ENCODE measurements at regions of chr4 and their contacts with region 1.

Region 1: GRCh38 chr4:158729716-158730559 is 6.7 kb upstream of the PPID start:
- DNase-seq: peak; percentile 76
- ATAC-seq: peak; percentile 96
- H3K4me3 ChIP-seq: no peak overlapping the region
- H3K27ac ChIP-seq: no peak overlapping the region
- H3K4me1 ChIP-seq: no peaks in the 10 kb centered on the region
- H3K27me3 ChIP-seq: no peaks in the 10 kb centered on the region; the same call in 1 of the 2 replicates
- CTCF ChIP-seq: peak; percentile 90

Region 2: DNA sequence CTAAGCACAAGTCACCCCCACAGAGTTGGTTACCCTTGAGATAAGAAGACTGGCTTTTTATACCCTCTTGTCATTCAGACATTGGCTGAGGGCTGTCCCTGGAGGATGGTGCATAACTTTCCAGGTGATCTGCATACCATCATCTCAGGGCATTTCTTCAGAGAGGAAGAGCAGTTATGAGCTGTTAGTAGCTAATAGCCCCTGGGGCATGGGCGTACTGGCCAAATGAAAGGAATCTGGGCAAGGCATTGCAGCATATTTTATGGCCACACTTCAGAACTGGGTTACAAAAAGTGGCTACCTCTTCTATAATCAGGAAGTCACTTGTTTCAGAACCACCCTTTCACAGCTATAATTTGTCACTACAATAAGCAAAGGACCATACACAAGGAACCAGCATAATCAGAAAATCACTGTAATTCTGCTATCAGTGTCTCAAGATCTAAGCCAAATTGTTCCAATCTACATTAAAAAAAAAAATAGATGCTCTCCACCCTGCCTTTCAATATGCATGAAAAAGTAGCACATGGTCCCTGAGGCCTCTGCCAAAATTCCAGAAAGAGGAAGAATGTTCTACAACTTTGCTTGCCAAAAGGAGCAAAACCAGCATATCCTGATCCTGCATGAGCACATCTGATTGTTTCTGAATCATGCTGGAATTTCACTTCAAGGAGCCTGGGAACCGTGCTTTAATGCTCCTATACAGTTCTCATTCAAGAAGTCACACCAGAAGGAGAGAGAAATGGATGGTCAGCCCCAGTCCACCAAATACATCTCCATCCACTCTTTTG is 427.7 kb before region 1 on chr4:
- CTCF ChIA-PET with region 1: no interaction called
- POLR2A ChIA-PET with region 1: no interaction called
- in situ Hi-C with region 1: no loop called
- intact Hi-C with region 1: no loop called
- DNase-seq: no peak
- ATAC-seq: no peak
- H3K4me3 ChIP-seq: no peak overlapping the region
- H3K27ac ChIP-seq: no peak overlapping the region
- H3K4me1 ChIP-seq: no peaks in the 10 kb centered on the region
- H3K27me3 ChIP-seq: no peaks in the 10 kb centered on the region
- CTCF ChIP-seq: no peak

Region 3: DNA sequence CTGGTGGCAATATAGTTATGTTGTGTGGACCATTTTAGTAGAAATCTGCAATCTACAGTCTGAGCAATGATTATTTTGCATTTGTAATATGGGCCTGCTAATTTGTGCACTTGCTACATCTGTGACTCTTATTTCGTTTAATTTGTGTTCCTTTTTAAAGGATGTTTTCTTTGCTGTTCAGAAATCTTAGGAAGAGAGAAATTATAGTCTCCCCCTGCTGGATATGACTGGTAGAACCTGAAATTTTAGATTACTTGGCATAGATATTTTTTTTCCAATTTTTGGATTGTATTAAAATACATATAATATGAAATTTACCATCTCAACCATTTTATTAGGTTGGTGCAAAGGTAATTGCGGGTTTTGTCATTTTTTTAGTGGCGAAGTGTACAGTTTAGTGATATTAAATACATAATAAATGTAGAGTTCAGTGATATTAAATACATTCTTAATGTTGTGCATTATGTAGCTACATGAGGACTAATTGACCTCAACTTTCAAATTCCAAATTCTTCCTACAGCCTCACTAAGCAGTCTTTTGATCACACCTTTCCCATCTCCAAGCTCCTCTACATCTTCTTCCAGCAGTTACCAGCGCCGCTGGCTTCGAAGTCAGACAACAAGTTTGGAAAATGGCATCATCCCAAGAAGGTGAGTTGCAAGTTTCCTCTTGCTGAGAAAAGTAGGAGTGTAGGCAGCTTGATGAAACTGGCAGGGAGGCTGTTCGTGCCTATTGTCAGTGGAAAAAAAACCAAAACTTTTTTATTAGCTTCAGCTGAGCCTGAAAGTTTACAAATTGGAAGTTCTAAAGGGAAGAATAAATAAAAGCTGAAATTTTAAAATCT is 121.1 kb after region 1 on chr4:
- CTCF ChIA-PET with region 1: interaction called, 3 read pairs
- POLR2A ChIA-PET with region 1: no interaction called
- in situ Hi-C with region 1: no loop called
- intact Hi-C with region 1: loop called (anchors 1 kb)
- DNase-seq: no peak
- ATAC-seq: no peak
- H3K4me3 ChIP-seq: no peak overlapping the region
- H3K27ac ChIP-seq: no peak overlapping the region
- H3K4me1 ChIP-seq: no peaks in the 10 kb centered on the region
- H3K27me3 ChIP-seq: no peaks in the 10 kb centered on the region
- CTCF ChIP-seq: peak; percentile 57; the same call in 1 of the 2 replicates

Region 4: DNA sequence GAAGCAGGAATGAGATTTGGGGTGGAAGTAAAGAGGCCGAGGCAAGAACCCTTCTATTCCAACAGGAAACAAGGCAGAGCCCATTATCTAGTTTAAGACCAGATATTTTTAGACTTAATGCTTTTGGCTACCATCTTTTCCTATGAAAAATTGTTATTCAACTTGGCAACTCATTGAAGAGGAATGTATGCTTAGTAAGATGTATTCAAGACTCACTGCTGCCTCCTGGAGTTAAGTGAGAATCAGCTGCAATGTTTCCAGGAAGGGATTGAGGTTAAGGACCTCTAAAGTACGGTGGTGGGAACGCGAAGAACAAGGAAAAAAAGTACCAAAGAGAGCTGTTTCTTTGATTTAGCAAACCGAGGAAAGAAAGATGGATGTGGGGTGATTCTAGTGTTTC is 462.1 kb after region 1 on chr4:
- CTCF ChIA-PET with region 1: no interaction called
- POLR2A ChIA-PET with region 1: no interaction called
- in situ Hi-C with region 1: no loop called
- intact Hi-C with region 1: loop called (anchors 5 kb)
- DNase-seq: no peak
- ATAC-seq: no peak
- H3K4me3 ChIP-seq: no peak overlapping the region
- H3K27ac ChIP-seq: no peak overlapping the region
- H3K4me1 ChIP-seq: no peaks in the 10 kb centered on the region
- H3K27me3 ChIP-seq: no peaks in the 10 kb centered on the region
- CTCF ChIP-seq: peak; percentile 50